Heart right ventricle (tissue), 16 donors: ENCODE measurements at regions of chr18 and their contacts with region 1.

Region 1: DNA sequence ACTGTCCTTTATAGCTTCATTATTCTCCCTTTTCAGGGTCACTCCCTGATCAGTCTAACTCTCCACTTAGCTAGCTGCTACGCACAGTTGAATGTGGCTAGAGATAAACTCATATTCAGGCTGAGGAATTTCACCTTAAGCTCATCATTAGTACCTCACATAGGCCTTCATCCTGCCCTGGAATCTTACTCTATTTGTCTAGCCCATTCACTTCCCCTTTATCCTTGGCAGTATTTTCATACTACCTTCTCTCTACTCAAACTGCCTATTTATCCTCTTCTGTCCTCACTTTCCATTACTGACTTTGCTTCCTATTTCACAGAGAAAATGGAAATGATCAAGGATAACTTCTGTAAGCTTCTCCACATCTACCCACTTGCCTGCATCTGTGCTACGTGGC is 10.6 kb upstream of the DSC2 start:
- DNase-seq: no peak
- ATAC-seq: no peak
- H3K4me3 ChIP-seq: no peak overlapping the region
- H3K27ac ChIP-seq: no peak overlapping the region
- H3K4me1 ChIP-seq: no peaks in the 10 kb centered on the region
- H3K27me3 ChIP-seq: no peaks in the 10 kb centered on the region
- CTCF ChIP-seq: no peak

Region 2: GRCh38 chr18:31162419-31162793 is 49.6 kb after region 1 on chr18:
- intact Hi-C with region 1: loop called in 1 of 10 experiments (anchors 10 kb)
- DNase-seq: no peak
- ATAC-seq: peak in 3 of 8 donors; percentile 22 to 61 (median 37)
- H3K4me3 ChIP-seq: no peak overlapping the region
- H3K27ac ChIP-seq: peak overlapping the region in 3 of 10 donors; percentile 14 to 41 (median 16)
- H3K4me1 ChIP-seq: peaks cover 0 to 5% (median 0%) of the 10 kb centered on the region in 9 donors
- H3K27me3 ChIP-seq: no peaks in the 10 kb centered on the region
- CTCF ChIP-seq: no peak

Region 3: GRCh38 chr18:31325051-31325450 is 212.2 kb after region 1 on chr18:
- intact Hi-C with region 1: loop called in 1 of 10 experiments (anchors 5 kb)
- DNase-seq: peak in 1 of 2 donors; percentile 22
- ATAC-seq: peak in 4 of 8 donors; percentile 17 to 73 (median 30)
- H3K4me3 ChIP-seq: no peak overlapping the region
- H3K27ac ChIP-seq: no peak overlapping the region
- H3K4me1 ChIP-seq: peaks cover 0 to 11% (median 0%) of the 10 kb centered on the region in 9 donors
- H3K27me3 ChIP-seq: no peaks in the 10 kb centered on the region
- CTCF ChIP-seq: no peak